ENCODE measurements at regions of chr20 and their contacts with region 1.

Region 1: DNA sequence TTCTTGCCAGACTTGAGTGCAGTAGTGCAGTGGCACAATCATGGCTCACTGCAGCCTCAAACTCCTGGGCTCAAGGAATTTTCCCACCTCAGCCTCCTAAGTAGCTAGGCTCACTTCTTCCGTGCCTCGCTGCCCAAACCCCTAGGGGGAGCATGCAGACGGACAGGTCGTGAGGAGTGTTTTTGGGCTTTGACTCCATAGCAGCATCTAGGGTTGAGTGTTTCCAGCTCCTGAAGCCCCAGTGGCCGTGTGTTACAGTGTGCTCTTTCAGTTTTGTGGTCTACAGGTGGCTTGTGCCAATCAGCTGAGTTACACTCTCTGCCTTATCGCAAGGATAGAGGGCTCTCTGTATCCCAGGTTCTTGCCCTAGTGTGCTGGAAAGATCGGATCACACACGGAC is 33.4 kb downstream of the NCOA3 start:
- DNase-seq: peak; percentile 50 to 65
- H3K4me3 ChIP-seq: no peak overlapping the region
- H3K27ac ChIP-seq: no peak overlapping the region
- H3K4me1 ChIP-seq: peaks cover 0 to 2% (median 1%) of the 10 kb centered on the region in 4 experiments; a peak in 2 of 7 replicates
- H3K27me3 ChIP-seq: no peaks in the 10 kb centered on the region
- CTCF ChIP-seq: peak; percentile 72 to 89 (median 87)
- EP300 ChIP-seq: no peak
- POLR2A ChIP-seq: no peak
- RAD21 ChIP-seq: peak; percentile 56 to 64

Region 2: GRCh38 chr20:47423586-47423985 is 111.5 kb before region 1 on chr20:
- CTCF ChIA-PET with region 1: no interaction called
- POLR2A ChIA-PET with region 1: no interaction called
- DNase-seq: no peak
- H3K4me3 ChIP-seq: no peak overlapping the region
- H3K27ac ChIP-seq: no peak overlapping the region
- H3K4me1 ChIP-seq: peaks cover 0 to 4% (median 0%) of the 10 kb centered on the region in 4 experiments; a peak in 1 of 7 replicates
- H3K27me3 ChIP-seq: no peaks in the 10 kb centered on the region
- CTCF ChIP-seq: no peak
- EP300 ChIP-seq: no peak
- POLR2A ChIP-seq: no peak
- RAD21 ChIP-seq: no peak

Region 3: GRCh38 chr20:47568001-47568407 is 32.9 kb after region 1 on chr20:
- CTCF ChIA-PET with region 1: interaction called, 13 read pairs
- POLR2A ChIA-PET with region 1: no interaction called
- DNase-seq: no peak
- H3K4me3 ChIP-seq: no peak overlapping the region
- H3K27ac ChIP-seq: no peak overlapping the region
- H3K4me1 ChIP-seq: peaks cover 0 to 2% (median 0%) of the 10 kb centered on the region in 4 experiments; a peak in 2 of 7 replicates
- H3K27me3 ChIP-seq: no peaks in the 10 kb centered on the region
- CTCF ChIP-seq: no peak
- EP300 ChIP-seq: no peak
- POLR2A ChIP-seq: no peak
- RAD21 ChIP-seq: no peak

Region 4: DNA sequence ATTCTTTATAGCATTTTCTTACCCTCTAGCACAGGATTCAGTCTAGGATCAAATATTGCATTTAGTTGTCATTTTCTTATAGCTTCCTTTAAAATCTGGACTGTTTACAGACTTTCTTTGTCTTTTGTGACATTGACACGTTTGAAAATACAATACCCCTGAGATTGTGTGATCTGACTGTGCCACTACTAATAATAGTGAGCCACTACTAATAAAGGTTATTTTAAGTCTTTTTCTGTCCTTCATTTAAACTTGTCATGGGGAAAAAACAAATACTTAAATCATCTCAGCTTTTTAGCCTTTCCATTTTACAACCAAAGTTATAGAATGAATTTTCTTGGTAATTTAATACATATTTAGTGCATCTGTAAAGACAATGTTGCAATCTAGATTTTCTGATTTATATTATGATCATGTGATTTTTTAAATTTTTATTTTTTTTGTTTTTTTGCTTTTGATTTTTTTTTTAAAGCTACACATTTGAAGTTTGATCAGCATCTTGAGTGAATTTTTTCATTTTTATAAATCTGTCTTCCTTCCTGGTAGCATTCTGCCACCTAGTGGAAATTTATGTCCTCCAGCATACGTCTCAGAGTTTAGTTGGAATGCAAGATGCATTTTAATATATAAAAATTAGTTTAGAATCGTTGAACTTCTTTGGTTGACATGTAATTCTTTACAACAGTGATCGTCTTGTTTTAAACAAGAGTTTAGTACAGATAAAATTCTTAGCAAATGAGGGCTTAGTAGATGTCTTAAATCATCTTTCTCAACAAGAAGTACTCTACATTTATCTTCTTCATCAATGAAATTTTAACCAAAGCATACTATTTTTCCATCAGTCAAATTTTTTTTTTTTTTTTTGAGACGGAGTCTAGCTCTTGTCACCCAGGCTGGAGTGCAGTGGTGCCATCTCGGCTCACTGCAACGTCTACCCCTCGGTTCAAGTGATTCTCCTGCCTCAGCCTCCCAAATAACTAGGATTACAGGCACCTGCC is 86.0 kb after region 1 on chr20:
- CTCF ChIA-PET with region 1: interaction called, 20 read pairs
- POLR2A ChIA-PET with region 1: no interaction called
- DNase-seq: no peak
- H3K4me3 ChIP-seq: no peak overlapping the region
- H3K27ac ChIP-seq: no peak overlapping the region
- H3K4me1 ChIP-seq: peaks cover 0 to 4% (median 1%) of the 10 kb centered on the region in 4 experiments; a peak in 2 of 7 replicates
- H3K27me3 ChIP-seq: no peaks in the 10 kb centered on the region
- CTCF ChIP-seq: peak in 2 of 3 experiments; percentile 39 to 50; a peak in 2 of 4 replicates
- EP300 ChIP-seq: no peak
- POLR2A ChIP-seq: no peak
- RAD21 ChIP-seq: peak; percentile 79 to 84